Head of caudate nucleus (tissue), 42 donors: ENCODE measurements at regions of chr5 and their contacts with region 1.

Region 1: DNA sequence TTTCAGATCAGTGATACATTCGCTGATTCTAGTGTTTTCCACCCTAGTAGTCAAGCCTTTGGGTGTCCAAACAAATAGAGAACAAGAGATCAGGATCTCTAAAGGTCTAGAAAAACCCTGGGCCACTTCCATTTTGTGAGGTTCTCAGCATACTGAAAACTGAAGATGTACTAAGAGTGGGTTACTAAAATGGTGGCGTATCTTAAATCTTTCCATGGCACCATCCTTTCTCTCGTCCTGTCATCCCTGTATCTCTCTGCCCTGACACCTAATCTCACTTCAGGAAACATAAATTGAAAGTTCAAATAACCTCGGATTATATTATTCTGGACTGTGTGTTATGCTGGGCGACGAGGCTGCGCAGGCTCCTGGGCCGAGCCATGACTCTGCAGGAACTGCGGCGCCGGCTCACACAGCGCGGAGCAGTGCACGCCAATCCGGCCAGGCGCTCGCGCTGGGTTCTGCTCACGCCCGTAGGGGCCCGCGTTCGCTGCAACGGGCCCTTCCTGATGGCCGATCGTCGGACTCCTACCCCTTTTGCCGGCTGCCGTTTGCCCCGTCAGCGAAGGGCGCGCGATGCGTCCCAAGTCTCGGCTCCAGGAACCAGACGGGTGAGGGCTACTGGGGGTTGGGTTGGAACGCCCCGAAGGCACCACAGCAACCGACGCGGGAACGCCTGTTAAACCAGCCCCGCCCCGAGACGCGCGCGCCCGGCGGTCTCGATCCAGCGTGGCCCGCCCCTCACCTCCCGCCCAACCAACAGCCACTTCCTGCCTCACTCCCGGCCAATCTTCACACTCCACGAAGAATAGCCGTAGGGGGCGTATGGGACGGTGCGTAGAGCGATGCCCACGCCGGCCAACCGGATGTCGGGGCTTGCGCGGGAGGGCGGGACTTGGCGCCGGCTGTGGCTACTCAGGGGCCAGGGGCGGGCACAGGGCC is 503 bp upstream of the CANX start:
- DNase-seq: peak; percentile 97 to 100 (median 99)

Region 2: GRCh38 chr5:179530069-179530998 is 167.9 kb before region 1 on chr5:
- intact Hi-C with region 1: no loop called
- DNase-seq: peak in 38 of 42 donors; percentile 11 to 77 (median 52)

Region 3: GRCh38 chr5:179678223-179679013 is 19.8 kb before region 1 on chr5:
- intact Hi-C with region 1: loop called (anchors 2 kb)
- DNase-seq: peak; percentile 88 to 98 (median 95)

Region 4: GRCh38 chr5:179732417-179732917 is 34.2 kb after region 1 on chr5 and contains the start of gene MAML1:
- intact Hi-C with region 1: loop called (anchors 2 kb)
- DNase-seq: peak; percentile 99 to 100 (median 100)